BJ (cell line): ENCODE measurements at regions of chr16 and their contacts with region 1.

Region 1: DNA sequence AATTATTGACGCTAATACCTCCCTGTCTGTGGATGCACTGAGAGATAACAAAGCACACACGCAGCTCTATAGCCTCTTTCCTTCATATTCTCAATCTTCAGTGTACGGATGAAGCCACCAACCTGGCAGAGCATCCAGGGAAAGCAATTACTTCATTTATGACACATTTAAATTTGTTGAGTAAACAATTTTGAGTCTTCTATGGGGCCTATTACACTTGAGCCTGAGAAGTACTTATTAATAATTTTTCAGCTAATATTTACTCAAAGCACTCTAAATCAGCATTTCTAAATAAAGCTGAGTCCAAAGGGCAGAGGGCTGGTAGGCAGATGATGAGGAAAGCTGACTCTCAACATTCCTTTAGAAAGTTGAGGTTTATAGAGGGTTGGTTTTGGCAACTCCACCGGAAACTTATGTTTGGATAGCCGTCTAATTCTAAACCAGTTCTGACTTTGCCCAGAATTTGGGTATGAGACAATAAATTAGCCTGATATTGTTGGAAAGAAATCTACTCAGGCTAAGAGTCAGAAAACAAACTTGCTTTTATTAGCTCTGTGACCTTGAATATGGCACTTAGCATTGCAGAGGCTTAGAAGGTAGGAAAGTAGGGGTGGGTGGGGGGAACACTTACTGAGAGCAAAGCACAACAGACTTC is 643.5 kb downstream of the CDH11 start:
- DNase-seq: peak; percentile 49
- H3K4me3 ChIP-seq: no peak overlapping the region
- H3K27me3 ChIP-seq: no peaks in the 10 kb centered on the region
- CTCF ChIP-seq: no peak

Region 2: GRCh38 chr16:65117811-65118448 is 639.6 kb after region 1 on chr16:
- CTCF ChIA-PET with region 1: interaction called, 3 read pairs
- POLR2A ChIA-PET with region 1: interaction called, 17 read pairs
- DNase-seq: peak; percentile 39
- H3K4me3 ChIP-seq: peak overlapping the region; percentile 2
- H3K27me3 ChIP-seq: no peaks in the 10 kb centered on the region; the same call in 1 of the 2 replicates
- CTCF ChIP-seq: peak; percentile 92